ENCODE measurements at regions of chr15 and their contacts with region 1.

Region 1: GRCh38 chr15:65610871-65611718 is at the start of gene INTS14:
- DNase-seq: peak; percentile 97
- CTCF ChIP-seq: peak; percentile 69

Region 2: GRCh38 chr15:65231306-65231705 is 379.8 kb before region 1 on chr15:
- CTCF ChIA-PET with region 1: no interaction called
- POLR2A ChIA-PET with region 1: no interaction called
- DNase-seq: no peak
- CTCF ChIP-seq: no peak

Region 3: DNA sequence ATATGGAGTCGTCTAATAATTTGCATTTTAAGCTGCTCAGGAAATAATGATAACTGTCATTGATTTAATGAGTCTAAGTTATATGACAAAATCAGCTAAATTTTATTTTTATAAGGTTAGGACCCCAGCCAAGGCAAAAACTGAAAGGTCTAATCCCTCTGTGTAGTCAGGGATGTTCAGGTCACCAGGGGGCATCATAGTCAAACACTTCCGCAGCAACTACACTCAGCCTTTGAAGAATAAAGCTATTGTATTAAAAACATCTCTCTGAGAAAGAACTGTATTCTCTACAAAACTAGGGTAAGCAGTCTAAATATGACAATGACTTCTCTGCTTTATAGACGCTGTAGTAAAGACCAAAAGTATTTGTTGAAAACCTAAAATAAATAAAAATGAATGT is 15.1 kb before region 1 on chr15:
- CTCF ChIA-PET with region 1: interaction called, 12 read pairs
- POLR2A ChIA-PET with region 1: no interaction called
- DNase-seq: no peak
- CTCF ChIP-seq: peak; percentile 38

Region 4: DNA sequence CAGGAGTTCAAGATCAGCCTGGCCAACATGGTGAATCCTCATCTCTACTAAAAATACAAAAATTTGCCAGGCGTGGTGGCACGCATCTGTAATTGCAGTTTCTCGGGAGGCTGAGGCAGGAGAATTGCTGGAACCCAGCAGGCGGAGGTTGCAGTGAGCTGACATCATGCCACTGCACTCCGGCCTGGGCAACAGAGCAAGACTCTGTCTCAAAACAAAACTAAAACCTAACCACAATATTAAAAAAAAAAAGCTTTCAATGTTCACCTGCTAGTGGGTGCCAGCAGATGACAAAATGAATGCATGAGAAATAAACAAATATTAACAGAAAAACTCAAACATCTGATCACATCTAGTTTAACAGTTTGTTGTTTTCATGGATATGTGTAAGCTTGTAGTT is 19.7 kb after region 1 on chr15:
- CTCF ChIA-PET with region 1: interaction called, 13 read pairs
- POLR2A ChIA-PET with region 1: no interaction called
- DNase-seq: no peak
- CTCF ChIP-seq: no peak

Region 5: DNA sequence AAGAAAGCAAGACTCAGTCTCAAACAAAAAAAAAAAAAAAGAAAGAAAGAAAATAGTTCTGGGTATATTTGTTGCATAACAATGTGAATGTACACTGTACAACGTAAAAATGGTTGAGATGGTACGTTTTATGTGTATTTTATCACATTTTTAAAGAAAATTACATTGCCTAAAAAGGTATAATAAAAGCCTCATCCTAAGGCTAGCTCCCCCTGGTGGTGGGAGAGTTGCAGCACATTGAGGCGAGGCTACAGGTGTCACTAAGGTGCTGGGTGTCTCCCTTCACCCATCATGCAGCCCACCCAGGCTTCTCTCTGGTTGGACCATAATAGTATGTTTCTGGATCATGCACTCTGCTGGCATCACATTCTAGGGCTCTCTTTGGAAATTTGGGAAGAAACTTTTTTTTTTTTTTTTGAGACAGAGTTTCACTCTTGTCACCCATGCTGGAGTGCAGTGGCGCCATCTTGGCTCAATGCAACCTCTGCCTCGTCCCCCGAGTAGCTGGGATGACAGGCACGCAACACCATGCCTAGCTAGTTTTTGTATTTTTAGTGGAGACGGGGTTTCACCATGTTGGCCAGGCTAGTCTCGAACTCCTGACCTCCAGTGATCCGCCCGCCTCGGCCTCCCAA is 245.8 kb after region 1 on chr15:
- CTCF ChIA-PET with region 1: interaction called, 12 read pairs
- POLR2A ChIA-PET with region 1: no interaction called
- DNase-seq: peak; percentile 52
- CTCF ChIP-seq: peak; percentile 74

Measured in GM10248 (cell line).